CD4-positive, alpha-beta T cell (primary cell): ENCODE measurements at regions of chr3 and their contacts with region 1.

Region 1: GRCh38 chr3:127672516-127673190 is at the start of gene ABTB1:
- DNase-seq: peak; percentile 75 to 94 (median 86)
- ATAC-seq: peak; percentile 83
- H3K4me3 ChIP-seq: peak within 1 kb of the TSS; percentile 73
- H3K4me3 Mint-ChIP-seq: peak within 1 kb of the TSS; percentile 97
- H3K27ac ChIP-seq: peak within 1 kb of the TSS; percentile 64 to 79
- H3K27ac Mint-ChIP-seq: peak within 1 kb of the TSS; percentile 98
- H3K4me1 ChIP-seq: peaks cover 32% of the 10 kb centered on the region
- H3K4me1 Mint-ChIP-seq: peaks cover 40% of the 10 kb centered on the region
- H3K27me3 ChIP-seq: no peaks in the 10 kb centered on the region
- H3K27me3 Mint-ChIP-seq: no peaks in the 10 kb centered on the region
- CTCF ChIP-seq: no peak
- total RNA-seq, gene ABTB1: 116 to 118 TPM

Region 2: DNA sequence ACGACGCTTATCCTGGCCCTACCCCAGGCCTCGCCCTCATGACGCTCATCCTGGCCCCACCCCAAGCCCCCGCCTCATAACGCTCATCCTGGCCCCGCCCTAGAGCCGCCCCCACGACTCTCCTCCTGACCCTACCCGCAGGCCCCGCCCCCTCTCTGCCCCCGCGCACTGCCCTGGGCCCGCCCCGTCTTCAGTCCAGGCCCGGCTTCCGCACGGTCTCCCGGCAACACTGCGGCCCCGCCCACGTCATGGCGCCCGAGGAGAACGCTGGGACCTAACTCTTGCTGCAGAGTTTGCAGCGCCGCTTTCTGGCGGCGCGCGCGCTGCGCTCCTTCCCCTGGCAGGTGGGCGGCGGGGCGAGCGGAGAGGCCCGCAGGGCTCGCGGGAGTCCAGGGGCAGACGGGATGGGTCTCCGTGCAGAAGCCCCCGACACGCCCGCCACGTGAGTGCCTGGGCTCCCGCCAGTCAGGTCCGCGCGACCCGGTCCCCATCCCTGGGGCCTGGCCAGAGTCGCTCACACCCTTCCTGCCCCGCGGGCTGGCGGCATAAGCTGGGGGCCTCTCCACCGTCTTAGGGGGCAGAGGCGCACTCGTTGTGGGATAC is 1756.2 kb before region 1 on chr3:
- CTCF ChIA-PET with region 1: no interaction called
- POLR2A ChIA-PET with region 1: no interaction called
- intact Hi-C with region 1: loop called in 1 of 2 experiments (anchors 5 kb)
- DNase-seq: peak in 12 of 14 experiments; percentile 93 to 98 (median 96)
- ATAC-seq: peak; percentile 89
- H3K4me3 ChIP-seq: peak overlapping the region; percentile 72
- H3K4me3 Mint-ChIP-seq: peak overlapping the region; percentile 91
- H3K27ac ChIP-seq: peak overlapping the region; percentile 50 to 87
- H3K27ac Mint-ChIP-seq: peak overlapping the region; percentile 95
- H3K4me1 ChIP-seq: peaks cover 12% of the 10 kb centered on the region
- H3K4me1 Mint-ChIP-seq: peaks cover 12% of the 10 kb centered on the region
- H3K27me3 ChIP-seq: no peaks in the 10 kb centered on the region
- H3K27me3 Mint-ChIP-seq: no peaks in the 10 kb centered on the region
- CTCF ChIP-seq: no peak

Region 3: GRCh38 chr3:126357295-126358037 is 1315.2 kb before region 1 on chr3 and contains the start of gene KLF15:
- CTCF ChIA-PET with region 1: no interaction called
- POLR2A ChIA-PET with region 1: no interaction called
- intact Hi-C with region 1: loop called in 1 of 2 experiments (anchors 5 kb)
- DNase-seq: peak; percentile 42 to 88 (median 65)
- ATAC-seq: peak; percentile 91
- H3K4me3 ChIP-seq: peak within 1 kb of the TSS; percentile 65
- H3K4me3 Mint-ChIP-seq: peak within 1 kb of the TSS; percentile 93
- H3K27ac ChIP-seq: no peak within 1 kb of the TSS
- H3K27ac Mint-ChIP-seq: no peak within 1 kb of the TSS
- H3K4me1 ChIP-seq: peaks cover 24% of the 10 kb centered on the region
- H3K4me1 Mint-ChIP-seq: peaks cover 17% of the 10 kb centered on the region
- H3K27me3 ChIP-seq: peaks cover 45 to 49% of the 10 kb centered on the region in 2 experiments
- H3K27me3 Mint-ChIP-seq: peaks cover 58% of the 10 kb centered on the region
- CTCF ChIP-seq: no peak
- total RNA-seq, gene KLF15: 0.30 TPM in 1 of 2 experiments, not detected in the other

Region 4: GRCh38 chr3:126982471-126983175 is 690.0 kb before region 1 on chr3 and contains the start of gene PLXNA1:
- CTCF ChIA-PET with region 1: no interaction called
- POLR2A ChIA-PET with region 1: no interaction called
- intact Hi-C with region 1: loop called in 1 of 2 experiments (anchors 5 kb)
- DNase-seq: peak; percentile 76 to 95 (median 85)
- ATAC-seq: peak; percentile 82
- H3K4me3 ChIP-seq: peak within 1 kb of the TSS; percentile 67
- H3K4me3 Mint-ChIP-seq: peak within 1 kb of the TSS; percentile 89
- H3K27ac ChIP-seq: peak within 1 kb of the TSS; percentile 88 to 90
- H3K27ac Mint-ChIP-seq: peak within 1 kb of the TSS; percentile 93
- H3K4me1 ChIP-seq: peaks cover 30% of the 10 kb centered on the region
- H3K4me1 Mint-ChIP-seq: peaks cover 15% of the 10 kb centered on the region
- H3K27me3 ChIP-seq: peaks cover 0 to 5% of the 10 kb centered on the region in 2 experiments
- H3K27me3 Mint-ChIP-seq: peaks cover 10% of the 10 kb centered on the region
- CTCF ChIP-seq: peak; percentile 99
- total RNA-seq, gene PLXNA1: 9.8 to 10.6 TPM

Region 5: GRCh38 chr3:127628788-127629466 is 43.7 kb before region 1 on chr3 and contains the start of gene PODXL2:
- CTCF ChIA-PET with region 1: no interaction called
- POLR2A ChIA-PET with region 1: interaction called, 3 read pairs
- intact Hi-C with region 1: loop called in 1 of 2 experiments (anchors 2 kb)
- DNase-seq: peak in 9 of 14 experiments; percentile 12 to 77 (median 41)
- ATAC-seq: peak; percentile 40
- H3K4me3 ChIP-seq: peak within 1 kb of the TSS; percentile 65
- H3K4me3 Mint-ChIP-seq: peak within 1 kb of the TSS; percentile 90
- H3K27ac ChIP-seq: no peak within 1 kb of the TSS
- H3K27ac Mint-ChIP-seq: peak within 1 kb of the TSS; percentile 67
- H3K4me1 ChIP-seq: peaks cover 29% of the 10 kb centered on the region
- H3K4me1 Mint-ChIP-seq: peaks cover 44% of the 10 kb centered on the region
- H3K27me3 ChIP-seq: peaks cover 8 to 11% of the 10 kb centered on the region in 2 experiments
- H3K27me3 Mint-ChIP-seq: peaks cover 36% of the 10 kb centered on the region
- CTCF ChIP-seq: no peak
- total RNA-seq, gene PODXL2: 4.0 to 4.2 TPM

Region 6: DNA sequence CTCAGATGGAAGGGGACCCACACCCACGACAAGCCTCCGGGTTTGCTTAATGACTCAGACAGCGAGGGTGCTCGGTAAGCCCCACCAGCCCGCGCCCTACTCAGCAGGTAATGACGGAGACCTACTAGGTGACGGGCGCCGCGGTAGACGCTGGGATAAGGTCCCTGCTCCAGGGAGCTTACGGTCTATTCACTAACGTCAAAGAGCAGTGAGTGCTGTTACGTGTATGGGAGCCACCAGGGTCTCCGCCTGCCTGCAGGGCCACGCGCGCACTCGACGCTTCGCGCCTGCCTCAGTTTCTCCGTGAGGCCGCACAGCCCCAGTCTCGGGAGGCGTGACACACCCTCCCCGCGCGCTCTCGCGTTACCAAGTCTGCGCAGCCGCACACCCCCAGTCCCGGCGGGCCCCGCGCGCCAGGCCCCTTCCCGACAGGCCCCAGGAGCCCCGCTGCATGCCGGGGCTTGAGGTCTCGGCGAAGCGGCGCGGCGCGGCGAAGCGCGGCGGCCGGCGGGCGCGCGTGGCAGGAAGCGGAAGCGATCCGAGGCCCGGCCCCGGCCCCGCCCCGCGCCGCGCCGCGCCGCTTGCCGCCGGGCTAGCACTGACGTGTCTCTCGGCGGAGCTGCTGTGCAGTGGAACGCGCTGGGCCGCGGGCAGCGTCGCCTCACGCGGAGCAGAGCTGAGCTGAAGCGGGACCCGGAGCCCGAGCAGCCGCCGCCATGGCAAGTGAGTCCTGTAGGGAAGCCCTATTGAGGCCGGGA is 379.4 kb after region 1 on chr3 and contains the start of gene SEC61A1:
- CTCF ChIA-PET with region 1: no interaction called
- POLR2A ChIA-PET with region 1: no interaction called
- intact Hi-C with region 1: loop called in 1 of 2 experiments (anchors 5 kb)
- DNase-seq: peak; percentile 91 to 97 (median 94)
- ATAC-seq: peak; percentile 93
- H3K4me3 ChIP-seq: peak within 1 kb of the TSS; percentile 95
- H3K4me3 Mint-ChIP-seq: peak within 1 kb of the TSS; percentile 99
- H3K27ac ChIP-seq: peak within 1 kb of the TSS; percentile 72 to 73
- H3K27ac Mint-ChIP-seq: peak within 1 kb of the TSS; percentile 88
- H3K4me1 ChIP-seq: peaks cover 37% of the 10 kb centered on the region
- H3K4me1 Mint-ChIP-seq: peaks cover 47% of the 10 kb centered on the region
- H3K27me3 ChIP-seq: no peaks in the 10 kb centered on the region
- H3K27me3 Mint-ChIP-seq: no peaks in the 10 kb centered on the region
- CTCF ChIP-seq: no peak
- total RNA-seq, gene SEC61A1: 127 to 139 TPM

Region 7: DNA sequence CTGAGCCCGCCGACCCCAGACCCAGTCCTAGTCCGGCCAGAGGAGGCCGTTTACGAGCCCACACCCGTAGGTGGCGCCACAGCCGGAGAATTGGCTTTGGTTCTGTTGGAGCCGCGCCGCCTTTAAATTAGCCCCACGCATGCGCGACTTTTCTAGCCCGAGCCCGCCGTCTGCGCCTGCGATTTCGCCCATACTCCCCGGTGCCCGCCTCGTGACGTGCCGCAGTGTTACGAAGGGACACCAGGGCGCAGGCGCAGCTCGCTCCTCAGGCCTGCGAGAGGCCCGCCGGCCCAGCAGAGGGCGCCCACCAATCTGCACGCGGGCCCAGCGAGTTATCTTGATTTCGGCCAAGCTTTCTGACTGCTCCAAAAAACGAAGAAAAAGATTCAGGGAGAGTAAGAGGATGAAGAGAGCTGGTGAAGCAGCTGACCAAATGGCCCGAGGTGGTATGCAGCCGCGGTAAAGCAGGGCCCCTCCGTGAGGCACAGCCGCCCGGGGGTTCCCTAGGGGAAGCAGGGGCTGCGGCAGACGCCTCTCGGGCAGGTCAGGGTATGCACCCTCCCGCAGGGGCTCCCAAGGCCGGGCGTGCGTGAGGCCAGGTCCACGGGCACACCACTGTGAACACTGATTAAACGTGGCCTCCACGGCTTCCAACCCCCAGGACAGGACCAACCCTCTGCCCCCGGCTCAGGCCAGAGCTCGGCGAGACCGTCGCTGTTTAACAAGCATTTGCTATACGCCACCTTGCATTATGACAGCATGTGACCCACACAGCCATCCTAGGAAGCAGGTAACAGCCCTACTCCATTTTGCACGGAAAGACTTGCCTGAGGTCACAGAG is 945.1 kb after region 1 on chr3:
- CTCF ChIA-PET with region 1: no interaction called
- POLR2A ChIA-PET with region 1: no interaction called
- intact Hi-C with region 1: loop called in 1 of 2 experiments (anchors 5 kb)
- DNase-seq: peak; percentile 94 to 100 (median 99)
- ATAC-seq: peak; percentile 92
- H3K4me3 ChIP-seq: peak overlapping the region; percentile 99
- H3K4me3 Mint-ChIP-seq: peak overlapping the region; percentile 98
- H3K27ac ChIP-seq: peak overlapping the region; percentile 89 to 91
- H3K27ac Mint-ChIP-seq: peak overlapping the region; percentile 96
- H3K4me1 ChIP-seq: peaks cover 28% of the 10 kb centered on the region
- H3K4me1 Mint-ChIP-seq: peaks cover 29% of the 10 kb centered on the region
- H3K27me3 ChIP-seq: no peaks in the 10 kb centered on the region
- H3K27me3 Mint-ChIP-seq: no peaks in the 10 kb centered on the region
- CTCF ChIP-seq: peak; percentile 96